Activated T-helper 2 cell treated with anti-CD3 and anti-CD28 coated beads, Interferon-gamma antibody, Interleukin-2, Interleukin-4, amounts not matched to agents 10 μg/mL and 5 μg/mL and 100 μg/mL, durations not matched to agents 14 hours and 24 hours and 36 hours (primary cell): ENCODE measurements at regions of chr15 and their contacts with region 1.

Region 1: GRCh38 chr15:98647774-98648653 is at the start of gene IGF1R:
- DNase-seq: peak; percentile 87
- H3K4me3 Mint-ChIP-seq: peak within 1 kb of the TSS; percentile 85
- H3K27ac Mint-ChIP-seq: peak within 1 kb of the TSS; percentile 92
- H3K4me1 Mint-ChIP-seq: peaks cover 26% of the 10 kb centered on the region
- H3K27me3 Mint-ChIP-seq: peaks cover 56% of the 10 kb centered on the region
- total RNA-seq, gene IGF1R: 31.1 and 46.2 TPM in 2 replicates

Region 2: DNA sequence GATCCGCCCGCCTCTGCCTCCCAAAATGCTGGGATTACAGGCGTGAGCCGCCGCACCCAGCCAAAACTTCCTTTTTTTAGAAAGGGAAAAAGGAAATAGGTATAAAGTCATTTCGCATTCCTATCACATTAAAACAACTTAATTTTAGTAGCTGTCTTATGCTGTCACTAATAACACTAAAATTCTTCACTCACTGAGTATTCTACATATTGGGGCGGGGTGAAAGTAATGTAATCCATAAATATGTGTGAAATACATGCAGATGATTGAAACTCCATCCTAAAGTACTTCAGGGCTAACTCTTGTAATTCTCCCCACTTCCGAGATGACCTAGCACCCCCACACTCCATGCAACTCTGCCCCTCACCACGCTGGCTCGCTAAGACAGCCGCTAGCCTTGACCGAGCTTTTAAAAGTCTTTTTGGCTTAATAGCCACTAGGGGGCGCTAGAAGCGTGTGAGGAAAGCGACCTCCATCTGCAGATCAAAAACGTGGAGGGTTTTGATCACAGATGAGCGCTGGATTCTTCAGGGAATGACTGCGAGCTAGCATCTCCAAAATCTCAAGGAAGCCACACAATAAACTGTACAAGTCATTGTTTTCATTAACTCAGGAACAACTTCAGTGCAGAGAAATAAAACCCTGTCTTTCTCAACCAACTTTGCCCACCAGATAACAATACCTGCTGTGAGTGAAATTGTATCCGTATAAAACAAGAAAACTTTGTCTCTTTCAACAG is 129.0 kb before region 1 on chr15:
- intact Hi-C with region 1: loop called (anchors 2 kb)
- DNase-seq: peak; percentile 13
- H3K4me3 Mint-ChIP-seq: no peak overlapping the region
- H3K27ac Mint-ChIP-seq: no peak overlapping the region
- H3K4me1 Mint-ChIP-seq: peaks cover 7% of the 10 kb centered on the region
- H3K27me3 Mint-ChIP-seq: peaks cover 6% of the 10 kb centered on the region

Region 3: GRCh38 chr15:98548154-98548971 is 99.7 kb before region 1 on chr15:
- intact Hi-C with region 1: loop called (anchors 2 kb)
- DNase-seq: peak; percentile 21
- H3K4me3 Mint-ChIP-seq: peak overlapping the region; percentile 75
- H3K27ac Mint-ChIP-seq: peak overlapping the region; percentile 50
- H3K4me1 Mint-ChIP-seq: peaks cover 8% of the 10 kb centered on the region
- H3K27me3 Mint-ChIP-seq: peaks cover 52% of the 10 kb centered on the region

Region 4: GRCh38 chr15:98658831-98659699 is 11.1 kb after region 1 on chr15:
- intact Hi-C with region 1: loop called (anchors 1 kb)
- DNase-seq: no peak
- H3K4me3 Mint-ChIP-seq: no peak overlapping the region
- H3K27ac Mint-ChIP-seq: no peak overlapping the region
- H3K4me1 Mint-ChIP-seq: peaks cover 10% of the 10 kb centered on the region
- H3K27me3 Mint-ChIP-seq: peaks cover 14% of the 10 kb centered on the region

Region 5: DNA sequence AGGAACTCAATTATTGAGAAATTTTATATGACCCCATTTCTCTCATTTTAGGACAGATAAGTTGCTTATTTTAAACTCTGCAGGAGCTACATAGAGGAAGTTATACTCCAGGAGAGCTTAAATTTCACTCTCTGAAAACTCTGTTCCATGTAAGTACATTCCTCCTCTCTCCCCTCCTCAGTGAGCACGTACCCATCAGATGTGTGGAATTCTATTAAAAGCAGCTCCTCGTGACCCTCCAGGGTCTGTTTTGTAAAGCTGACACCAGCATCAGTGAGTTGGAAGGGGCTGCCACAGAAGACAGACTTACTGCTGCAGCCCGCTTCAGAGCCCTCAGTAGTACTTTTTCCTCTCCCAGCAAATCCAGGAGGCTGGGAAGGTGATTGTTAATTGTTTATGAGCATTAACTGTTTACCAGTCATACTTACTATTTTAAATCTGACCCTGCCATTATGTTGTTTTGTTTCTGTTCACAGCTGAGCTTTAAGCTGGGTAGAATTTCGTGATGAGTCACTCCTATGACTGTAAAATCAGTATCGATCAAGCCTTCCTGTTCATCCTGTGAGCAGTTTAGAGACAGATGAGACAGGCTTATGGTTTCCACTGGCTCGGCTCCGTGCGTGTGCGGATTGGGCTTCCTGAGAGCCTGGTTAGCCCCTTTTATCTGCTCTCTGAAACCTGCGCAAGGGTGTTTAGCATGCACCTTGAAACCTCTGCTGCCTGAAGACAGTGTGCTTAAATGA is 20.7 kb after region 1 on chr15:
- intact Hi-C with region 1: loop called (anchors 2 kb)
- DNase-seq: peak; percentile 43
- H3K4me3 Mint-ChIP-seq: peak overlapping the region; percentile 18
- H3K27ac Mint-ChIP-seq: peak overlapping the region; percentile 19
- H3K4me1 Mint-ChIP-seq: peaks cover 54% of the 10 kb centered on the region
- H3K27me3 Mint-ChIP-seq: no peaks in the 10 kb centered on the region

Region 6: GRCh38 chr15:98842192-98842966 is 194.4 kb after region 1 on chr15:
- intact Hi-C with region 1: no loop called
- DNase-seq: no peak
- H3K4me3 Mint-ChIP-seq: no peak overlapping the region
- H3K27ac Mint-ChIP-seq: no peak overlapping the region
- H3K4me1 Mint-ChIP-seq: peaks cover 5% of the 10 kb centered on the region
- H3K27me3 Mint-ChIP-seq: no peaks in the 10 kb centered on the region

Region 7: DNA sequence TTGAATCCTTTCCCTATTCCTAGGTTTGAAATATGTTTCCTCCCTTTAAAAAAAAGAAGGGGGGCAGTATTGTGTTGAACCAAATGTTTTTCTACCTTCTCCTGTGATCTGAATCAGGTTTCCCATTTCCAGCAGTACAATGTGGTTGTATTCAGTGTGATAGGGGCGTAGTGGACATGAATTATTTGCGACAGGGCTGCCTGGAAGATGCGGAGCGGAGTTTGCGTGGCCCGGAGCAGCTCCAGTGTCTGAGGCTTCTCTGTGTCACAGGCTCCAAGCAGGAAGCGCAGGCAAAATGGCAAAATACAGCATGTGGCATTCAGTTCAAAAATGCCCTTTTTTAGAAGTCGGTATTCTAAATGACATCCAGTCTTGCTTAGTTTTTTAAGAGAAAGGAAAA is 205.1 kb after region 1 on chr15:
- intact Hi-C with region 1: loop called (anchors 1 kb)
- DNase-seq: peak; percentile 75
- H3K4me3 Mint-ChIP-seq: peak overlapping the region; percentile 93
- H3K27ac Mint-ChIP-seq: peak overlapping the region; percentile 93
- H3K4me1 Mint-ChIP-seq: peaks cover 37% of the 10 kb centered on the region
- H3K27me3 Mint-ChIP-seq: no peaks in the 10 kb centered on the region

Region 8: DNA sequence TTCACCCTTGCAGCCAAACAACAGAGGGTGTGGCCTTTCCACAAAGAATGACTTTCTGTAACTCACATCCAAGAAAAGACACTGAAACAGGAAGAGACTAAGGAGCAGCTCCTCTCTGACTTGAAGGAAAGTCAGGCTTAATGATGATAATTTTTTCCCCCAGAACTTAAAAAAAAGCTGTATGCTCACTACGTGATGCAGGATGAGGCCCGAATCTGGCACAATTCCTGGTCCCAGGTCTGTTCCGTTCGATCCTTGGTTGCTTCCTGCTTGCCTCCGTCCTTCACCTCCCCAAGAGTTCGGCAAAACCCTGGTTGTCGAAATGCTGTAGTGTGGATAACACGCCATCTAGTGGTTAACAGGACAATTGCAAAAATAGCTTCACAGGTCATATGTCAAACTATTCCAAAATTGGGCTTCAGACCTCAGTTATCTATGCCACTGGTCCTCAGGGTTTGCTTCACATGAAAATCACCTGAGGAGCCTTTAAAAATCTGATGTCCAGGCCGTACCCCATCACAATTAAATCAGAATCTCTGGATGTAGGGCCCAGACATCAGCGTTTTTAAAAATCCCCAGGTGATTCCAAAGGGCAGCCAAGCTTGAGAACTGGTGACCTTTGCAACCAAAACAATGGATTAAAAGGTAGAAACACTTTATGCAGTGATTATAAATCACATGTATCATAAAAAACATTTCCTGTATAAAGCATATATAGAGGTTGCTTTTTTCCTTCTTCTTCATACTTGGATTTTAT is 428.7 kb after region 1 on chr15:
- intact Hi-C with region 1: loop called (anchors 5 kb)
- DNase-seq: peak; percentile 24
- H3K4me3 Mint-ChIP-seq: peak overlapping the region; percentile 73
- H3K27ac Mint-ChIP-seq: no peak overlapping the region
- H3K4me1 Mint-ChIP-seq: peaks cover 2% of the 10 kb centered on the region
- H3K27me3 Mint-ChIP-seq: peaks cover 22% of the 10 kb centered on the region